Gastrocnemius medialis (tissue), 4 donors: ENCODE measurements at regions of chr10 and their contacts with region 1.

Region 1: GRCh38 chr10:15106352-15107013 is 9.3 kb downstream of the RPP38 start:
- DNase-seq: peak in 1 of 2 donors; percentile 38
- ATAC-seq: peak; percentile 76 to 91
- H3K4me3 ChIP-seq: no peak overlapping the region
- H3K27ac ChIP-seq: no peak overlapping the region
- H3K4me1 ChIP-seq: peaks cover 0 to 4% of the 10 kb centered on the region in 2 donors
- H3K27me3 ChIP-seq: no peaks in the 10 kb centered on the region
- CTCF ChIP-seq: peak; percentile 69 to 88 (median 79)
- POLR2A ChIP-seq: no peak

Region 2: DNA sequence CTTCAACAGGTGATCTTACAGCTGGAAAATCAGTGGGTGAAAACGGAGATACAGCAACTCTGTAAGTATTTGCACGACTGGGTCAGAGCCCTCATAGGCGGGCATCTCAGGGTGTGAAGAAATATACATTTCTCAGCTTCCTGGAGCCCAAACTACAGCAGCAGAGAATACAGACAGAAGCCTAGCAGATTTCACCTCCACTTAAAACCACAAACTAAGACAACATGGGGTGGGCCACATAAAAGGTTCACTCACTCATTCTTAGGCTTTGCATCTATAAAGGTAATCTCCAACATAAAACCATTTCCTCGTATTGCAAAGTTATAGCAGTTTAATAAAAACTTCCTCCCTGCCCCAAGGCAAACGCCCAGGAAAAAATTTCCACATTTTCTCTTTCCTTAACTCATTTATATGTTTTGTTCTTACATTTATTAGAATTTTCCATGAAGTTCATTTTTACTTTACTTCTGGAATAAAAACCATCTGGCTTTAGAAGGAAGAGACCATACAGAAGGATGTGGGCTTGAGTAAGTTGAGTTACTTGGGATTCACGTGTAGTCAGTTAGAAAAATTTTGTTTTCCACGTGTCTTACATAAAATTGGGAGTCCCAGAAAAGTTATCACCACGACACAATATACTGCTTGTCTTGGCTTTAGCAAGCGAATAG is 1102.8 kb before region 1 on chr10:
- in situ Hi-C with region 1: no loop called
- intact Hi-C with region 1: no loop called
- DNase-seq: no peak
- ATAC-seq: no peak
- H3K4me3 ChIP-seq: no peak overlapping the region
- H3K27ac ChIP-seq: no peak overlapping the region
- H3K4me1 ChIP-seq: peaks cover 0 to under 1% of the 10 kb centered on the region in 2 donors
- H3K27me3 ChIP-seq: peaks cover 0 to 3% (median 2%) of the 10 kb centered on the region in 3 donors
- CTCF ChIP-seq: no peak
- POLR2A ChIP-seq: no peak

Region 3: GRCh38 chr10:14904316-14904732 is 202.2 kb before region 1 on chr10:
- in situ Hi-C with region 1: no loop called
- intact Hi-C with region 1: no loop called
- DNase-seq: no peak
- ATAC-seq: no peak
- H3K4me3 ChIP-seq: no peak overlapping the region
- H3K27ac ChIP-seq: no peak overlapping the region
- H3K4me1 ChIP-seq: no peaks in the 10 kb centered on the region
- H3K27me3 ChIP-seq: no peaks in the 10 kb centered on the region
- CTCF ChIP-seq: peak in 1 of 5 experiments; percentile 45
- POLR2A ChIP-seq: no peak

Region 4: DNA sequence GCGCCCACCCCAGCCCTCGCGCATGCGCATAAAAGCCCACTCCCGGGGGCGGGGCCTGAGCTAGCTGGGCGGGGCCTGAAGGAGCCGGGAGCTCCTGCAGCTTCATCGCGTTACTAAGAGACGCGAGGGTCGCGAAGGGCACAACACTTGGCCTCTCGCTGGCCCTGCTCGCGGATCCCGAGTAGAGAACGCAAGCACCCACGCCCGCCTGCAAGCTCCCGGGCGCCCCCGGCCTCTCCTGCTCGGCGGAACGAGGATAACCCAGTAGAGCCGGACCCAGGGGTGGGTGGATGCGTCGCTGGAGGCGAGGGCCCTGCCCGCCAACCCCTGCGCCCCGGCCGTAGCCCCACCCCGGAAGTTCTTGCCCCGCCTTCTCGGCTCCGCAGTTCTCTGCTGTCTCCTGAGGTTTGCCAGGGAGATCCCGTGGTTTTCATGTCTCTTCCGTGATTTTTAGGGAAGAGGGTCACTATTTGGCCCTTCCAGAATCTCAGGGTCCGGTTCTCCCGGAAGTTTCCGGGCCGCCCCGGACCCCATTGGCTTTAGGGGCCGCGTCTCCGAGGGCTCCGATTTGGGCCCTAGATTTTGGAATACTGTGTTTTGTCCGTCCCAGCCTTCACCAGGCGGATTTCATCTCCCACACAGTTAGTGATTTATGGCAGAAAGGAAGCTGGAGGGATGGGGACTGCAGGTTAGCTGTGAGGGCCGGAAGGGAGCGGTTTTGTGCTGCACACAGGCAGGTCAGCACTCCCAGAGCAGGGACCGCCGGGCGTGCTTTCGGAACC is 147.0 kb before region 1 on chr10 and contains the start of gene MEIG1:
- in situ Hi-C with region 1: loop called in 3 of 4 experiments (anchors 10 kb)
- intact Hi-C with region 1: no loop called
- DNase-seq: peak; percentile 90 to 91
- ATAC-seq: peak; percentile 91 to 95
- H3K4me3 ChIP-seq: peak within 1 kb of the TSS; percentile 70 to 96 (median 81)
- H3K27ac ChIP-seq: peak within 1 kb of the TSS; percentile 94 to 98 (median 96)
- H3K4me1 ChIP-seq: peaks cover 4 to 6% of the 10 kb centered on the region in 2 donors
- H3K27me3 ChIP-seq: no peaks in the 10 kb centered on the region
- CTCF ChIP-seq: no peak
- POLR2A ChIP-seq: peak; percentile 42 to 52
- total RNA-seq, gene MEIG1: not detected

Region 5: GRCh38 chr10:15122477-15123030 is 16.1 kb after region 1 on chr10:
- in situ Hi-C with region 1: no loop called
- intact Hi-C with region 1: no loop called
- DNase-seq: no peak
- ATAC-seq: no peak
- H3K4me3 ChIP-seq: no peak overlapping the region
- H3K27ac ChIP-seq: no peak overlapping the region
- H3K4me1 ChIP-seq: no peaks in the 10 kb centered on the region
- H3K27me3 ChIP-seq: no peaks in the 10 kb centered on the region
- CTCF ChIP-seq: no peak
- POLR2A ChIP-seq: no peak

Region 6: GRCh38 chr10:15333909-15334649 is 227.6 kb after region 1 on chr10:
- in situ Hi-C with region 1: no loop called
- intact Hi-C with region 1: no loop called
- DNase-seq: no peak
- ATAC-seq: no peak
- H3K4me3 ChIP-seq: no peak overlapping the region
- H3K27ac ChIP-seq: no peak overlapping the region
- H3K4me1 ChIP-seq: peaks cover 0 to 11% of the 10 kb centered on the region in 2 donors
- H3K27me3 ChIP-seq: no peaks in the 10 kb centered on the region
- CTCF ChIP-seq: no peak
- POLR2A ChIP-seq: no peak